ENCODE measurements at regions of chr16 and their contacts with region 1.

Region 1: DNA sequence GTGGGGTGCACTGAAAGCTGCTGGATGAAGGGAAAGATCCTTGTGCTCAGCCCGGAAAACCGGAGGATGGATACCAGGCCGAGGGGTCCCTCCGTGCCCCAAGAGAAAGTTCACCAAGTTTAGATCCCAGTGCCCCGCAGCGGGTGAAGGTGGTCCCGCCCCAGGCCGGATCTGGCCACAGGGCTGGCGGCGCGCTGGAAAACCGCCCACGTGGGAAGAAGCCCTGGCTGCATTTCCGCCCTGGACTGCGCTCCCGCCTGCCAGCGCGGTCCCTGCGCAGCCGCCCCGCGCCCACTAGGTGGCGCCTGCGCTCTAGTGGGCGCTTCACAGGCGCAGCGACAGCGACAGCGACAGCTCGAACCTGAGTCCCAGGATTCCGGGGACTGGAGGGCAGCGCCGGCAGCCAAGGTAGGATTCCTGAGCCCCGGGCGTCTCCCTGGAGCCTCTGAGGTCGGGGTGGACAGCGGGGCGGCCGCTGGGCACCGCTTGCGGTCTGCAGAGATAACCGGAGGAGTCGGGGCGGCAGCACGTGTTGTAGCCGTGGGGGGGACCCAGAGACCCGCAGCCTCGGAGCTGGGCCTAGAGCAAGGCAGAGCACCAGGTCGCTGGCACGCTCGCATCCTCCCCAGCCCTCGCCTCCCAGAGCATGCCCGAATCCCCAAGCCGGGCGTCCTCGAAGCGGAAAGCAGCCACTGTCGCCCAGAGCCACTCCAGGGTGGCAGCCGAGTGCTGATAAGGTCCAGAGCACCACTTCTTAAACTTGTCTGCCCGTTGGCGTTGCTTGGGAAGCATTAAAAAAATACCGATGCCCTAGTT is at the start of gene CHD9:
- DNase-seq: peak; percentile 56
- ATAC-seq: peak; percentile 81
- H3K4me3 ChIP-seq: peak within 1 kb of the TSS; percentile 94
- H3K27ac ChIP-seq: peak within 1 kb of the TSS; percentile 74
- H3K4me1 ChIP-seq: peaks cover 22% of the 10 kb centered on the region
- H3K27me3 ChIP-seq: no peaks in the 10 kb centered on the region
- CTCF ChIP-seq: peak; percentile 97 to 99 (median 98)
- EP300 ChIP-seq: 0 out of 4 replicates have a peak, but pooled peaks of 1 of the 2 experiments have one; percentile 23
- POLR2A ChIP-seq: peak; percentile 70
- RAD21 ChIP-seq: peak; percentile 97
- polyA plus RNA-seq, gene CHD9: 70.5 to 95.7 TPM

Region 2: DNA sequence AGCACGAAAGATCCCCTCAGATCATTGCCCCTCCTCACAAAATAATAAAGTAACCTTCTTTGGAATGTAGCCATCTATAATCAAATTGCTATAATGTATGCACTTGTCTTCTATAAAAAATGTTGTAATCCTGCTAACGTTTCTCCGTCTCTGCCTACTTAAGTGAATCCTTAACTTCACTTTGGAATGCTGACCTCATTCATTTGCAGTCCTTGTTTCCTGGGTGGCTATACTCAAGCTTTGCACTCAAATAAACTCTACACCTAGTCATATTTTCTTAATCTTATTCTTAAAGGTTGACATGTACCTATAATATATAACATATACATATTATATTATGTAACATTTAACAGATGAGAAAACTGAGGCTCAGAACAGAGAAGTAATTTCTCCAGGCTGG is 24.9 kb before region 1 on chr16:
- CTCF ChIA-PET with region 1: no interaction called
- POLR2A ChIA-PET with region 1: no interaction called
- RAD21 ChIA-PET with region 1: no interaction called
- SMC1A ChIA-PET with region 1: no interaction called
- in situ Hi-C with region 1: no loop called
- intact Hi-C with region 1: no loop called
- DNase-seq: no peak
- ATAC-seq: no peak
- H3K4me3 ChIP-seq: no peak overlapping the region
- H3K27ac ChIP-seq: no peak overlapping the region
- H3K4me1 ChIP-seq: no peaks in the 10 kb centered on the region
- H3K27me3 ChIP-seq: no peaks in the 10 kb centered on the region
- CTCF ChIP-seq: no peak
- EP300 ChIP-seq: no peak
- POLR2A ChIP-seq: no peak
- RAD21 ChIP-seq: no peak

Region 3: GRCh38 chr16:53071748-53072301 is 16.9 kb after region 1 on chr16:
- CTCF ChIA-PET with region 1: interaction called, 8 read pairs
- POLR2A ChIA-PET with region 1: interaction called, 15 read pairs
- RAD21 ChIA-PET with region 1: interaction called, 23 read pairs
- SMC1A ChIA-PET with region 1: interaction called, 60 read pairs
- in situ Hi-C with region 1: no loop called
- intact Hi-C with region 1: no loop called
- DNase-seq: no peak
- ATAC-seq: peak; percentile 80
- H3K4me3 ChIP-seq: peak overlapping the region; percentile 52
- H3K27ac ChIP-seq: peak overlapping the region; percentile 78
- H3K4me1 ChIP-seq: peaks cover 55% of the 10 kb centered on the region
- H3K27me3 ChIP-seq: no peaks in the 10 kb centered on the region
- CTCF ChIP-seq: no peak
- EP300 ChIP-seq: peak; percentile 37 to 47; a peak in 2 of 4 replicates
- POLR2A ChIP-seq: no peak
- RAD21 ChIP-seq: no peak; the same call in 1 of the 2 replicates

Region 4: GRCh38 chr16:53111078-53111791 is 56.4 kb after region 1 on chr16:
- CTCF ChIA-PET with region 1: interaction called, 20 read pairs
- POLR2A ChIA-PET with region 1: interaction called, 6 read pairs
- RAD21 ChIA-PET with region 1: interaction called, 13 read pairs
- SMC1A ChIA-PET with region 1: interaction called, 32 read pairs
- in situ Hi-C with region 1: no loop called
- intact Hi-C with region 1: loop called (anchors 5 kb)
- DNase-seq: no peak
- ATAC-seq: peak; percentile 79
- H3K4me3 ChIP-seq: no peak overlapping the region; the same call in 1 of the 2 replicates
- H3K27ac ChIP-seq: peak overlapping the region; percentile 77
- H3K4me1 ChIP-seq: peaks cover 28% of the 10 kb centered on the region
- H3K27me3 ChIP-seq: no peaks in the 10 kb centered on the region
- CTCF ChIP-seq: no peak
- EP300 ChIP-seq: no peak
- POLR2A ChIP-seq: no peak
- RAD21 ChIP-seq: no peak

Region 5: DNA sequence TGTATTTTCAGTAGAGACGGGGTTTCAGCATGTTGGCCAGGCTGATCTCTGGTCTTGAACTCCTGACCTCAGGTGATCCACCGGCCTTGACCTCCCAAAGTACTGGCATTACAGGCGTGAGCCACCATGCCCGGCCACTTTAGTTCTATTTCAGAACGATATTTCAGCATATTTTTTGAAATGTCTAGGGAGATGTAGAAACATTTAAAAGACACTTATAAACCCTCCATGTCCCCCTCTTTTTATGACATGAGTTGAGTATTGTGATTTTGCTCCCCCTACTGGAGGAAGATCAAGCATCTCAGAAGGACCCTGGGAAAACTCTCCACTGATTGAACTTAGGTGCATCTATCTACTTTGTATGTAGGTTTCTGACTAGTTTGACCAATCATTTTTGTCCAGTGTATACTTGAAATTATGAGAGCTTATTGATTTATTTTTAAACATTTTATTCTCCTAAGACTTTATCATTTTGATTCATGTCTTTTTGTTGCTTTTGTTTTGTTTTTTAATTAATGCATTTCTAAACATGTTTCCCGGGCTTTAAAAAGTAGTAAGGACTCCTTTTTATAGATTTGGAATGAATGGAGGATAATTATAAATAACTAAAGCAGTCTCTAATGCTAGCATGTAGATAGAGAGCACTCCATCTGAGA is 105.0 kb after region 1 on chr16:
- CTCF ChIA-PET with region 1: interaction called, 64 read pairs
- POLR2A ChIA-PET with region 1: no interaction called
- RAD21 ChIA-PET with region 1: interaction called, 73 read pairs
- SMC1A ChIA-PET with region 1: interaction called, 88 read pairs
- in situ Hi-C with region 1: no loop called
- intact Hi-C with region 1: loop called (anchors 1 kb)
- DNase-seq: peak; percentile 20
- ATAC-seq: peak; percentile 99
- H3K4me3 ChIP-seq: no peak overlapping the region
- H3K27ac ChIP-seq: no peak overlapping the region
- H3K4me1 ChIP-seq: no peaks in the 10 kb centered on the region
- H3K27me3 ChIP-seq: no peaks in the 10 kb centered on the region
- CTCF ChIP-seq: peak; percentile 61 to 67 (median 65)
- EP300 ChIP-seq: no peak
- POLR2A ChIP-seq: no peak
- RAD21 ChIP-seq: peak; percentile 66

Region 6: DNA sequence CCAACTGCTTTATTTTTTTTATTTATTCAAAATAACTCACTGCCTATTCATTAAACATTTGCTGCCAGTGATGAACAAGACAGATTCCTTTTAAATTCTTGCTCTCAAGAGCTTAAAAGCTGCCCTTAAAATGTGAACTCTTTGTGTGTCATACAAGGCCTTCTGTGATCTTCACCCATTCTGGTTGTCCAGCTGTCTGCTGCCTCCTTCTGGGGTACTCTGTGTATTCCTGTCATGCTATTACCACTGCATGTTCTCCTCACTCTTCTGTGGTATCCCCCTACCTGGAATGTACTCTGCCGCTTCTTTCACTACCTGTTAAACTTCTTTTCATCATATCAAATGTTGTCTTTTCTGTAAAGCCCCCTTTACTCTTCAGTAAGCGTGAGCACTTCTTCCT is 165.7 kb after region 1 on chr16:
- CTCF ChIA-PET with region 1: interaction called, 33 read pairs
- POLR2A ChIA-PET with region 1: interaction called, 4 read pairs
- RAD21 ChIA-PET with region 1: interaction called, 12 read pairs
- SMC1A ChIA-PET with region 1: interaction called, 23 read pairs
- in situ Hi-C with region 1: loop called (anchors 5 kb)
- intact Hi-C with region 1: no loop called
- DNase-seq: no peak
- ATAC-seq: peak; percentile 81
- H3K4me3 ChIP-seq: no peak overlapping the region
- H3K27ac ChIP-seq: peak overlapping the region; percentile 38; the same call in 1 of the 2 replicates
- H3K4me1 ChIP-seq: peaks cover 18% of the 10 kb centered on the region; the same call in 1 of the 2 replicates
- H3K27me3 ChIP-seq: no peaks in the 10 kb centered on the region
- CTCF ChIP-seq: peak; percentile 25 to 40 (median 38); a peak in 3 of 6 replicates
- EP300 ChIP-seq: no peak
- POLR2A ChIP-seq: no peak
- RAD21 ChIP-seq: peak; percentile 57

Region 7: DNA sequence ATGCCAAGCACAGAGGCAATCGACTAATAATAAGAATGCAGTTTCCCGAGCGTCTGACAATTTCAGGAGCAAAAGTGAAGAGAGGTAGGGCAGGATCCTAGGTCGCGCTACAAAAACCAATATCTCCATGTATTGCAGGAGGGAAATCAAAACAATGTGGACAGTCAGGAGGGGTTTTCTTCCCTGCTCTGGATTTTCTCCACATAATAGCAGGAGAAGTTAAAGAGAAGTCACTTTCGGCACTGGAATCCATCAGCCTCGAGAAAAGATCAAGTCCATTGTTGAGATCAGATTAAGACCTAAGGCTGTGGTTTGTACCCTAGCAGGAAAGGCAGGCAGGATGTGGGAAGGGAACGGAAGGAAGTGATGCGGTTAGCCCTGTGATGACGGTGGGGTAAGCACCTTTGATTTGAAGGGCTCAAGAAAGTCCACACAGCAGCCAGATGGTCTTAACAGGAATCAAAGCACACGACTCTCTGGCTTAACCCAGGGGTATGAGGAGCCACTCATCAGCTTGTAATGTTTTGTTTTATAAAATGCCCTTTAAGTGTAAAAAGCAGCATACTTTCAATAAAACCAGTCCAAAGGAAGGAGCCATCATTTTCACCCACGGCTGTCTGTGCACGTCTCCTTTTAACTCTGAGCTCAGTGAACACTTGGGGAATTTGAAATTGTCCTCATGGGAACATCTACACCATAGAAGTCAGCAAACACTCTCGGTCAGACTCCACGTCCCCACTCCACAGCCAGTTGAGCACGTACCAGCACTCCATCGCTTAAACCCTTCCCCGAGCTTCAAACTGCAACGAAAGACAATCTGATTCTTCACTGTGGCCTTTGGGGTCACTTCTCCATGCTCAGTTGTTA is 463.9 kb after region 1 on chr16:
- CTCF ChIA-PET with region 1: interaction called, 3 read pairs
- POLR2A ChIA-PET with region 1: no interaction called
- RAD21 ChIA-PET with region 1: interaction called, 3 read pairs
- SMC1A ChIA-PET with region 1: no interaction called
- in situ Hi-C with region 1: loop called (anchors 5 kb)
- intact Hi-C with region 1: no loop called
- DNase-seq: peak; percentile 97
- ATAC-seq: peak; percentile 94
- H3K4me3 ChIP-seq: peak overlapping the region; percentile 44; the same call in 1 of the 2 replicates
- H3K27ac ChIP-seq: peak overlapping the region; percentile 94
- H3K4me1 ChIP-seq: peaks cover 21% of the 10 kb centered on the region
- H3K27me3 ChIP-seq: no peaks in the 10 kb centered on the region
- CTCF ChIP-seq: no peak
- EP300 ChIP-seq: peak; percentile 82 to 85
- POLR2A ChIP-seq: peak; percentile 65
- RAD21 ChIP-seq: no peak